ENCODE measurements at regions of chr6 and their contacts with region 1.

Region 1: DNA sequence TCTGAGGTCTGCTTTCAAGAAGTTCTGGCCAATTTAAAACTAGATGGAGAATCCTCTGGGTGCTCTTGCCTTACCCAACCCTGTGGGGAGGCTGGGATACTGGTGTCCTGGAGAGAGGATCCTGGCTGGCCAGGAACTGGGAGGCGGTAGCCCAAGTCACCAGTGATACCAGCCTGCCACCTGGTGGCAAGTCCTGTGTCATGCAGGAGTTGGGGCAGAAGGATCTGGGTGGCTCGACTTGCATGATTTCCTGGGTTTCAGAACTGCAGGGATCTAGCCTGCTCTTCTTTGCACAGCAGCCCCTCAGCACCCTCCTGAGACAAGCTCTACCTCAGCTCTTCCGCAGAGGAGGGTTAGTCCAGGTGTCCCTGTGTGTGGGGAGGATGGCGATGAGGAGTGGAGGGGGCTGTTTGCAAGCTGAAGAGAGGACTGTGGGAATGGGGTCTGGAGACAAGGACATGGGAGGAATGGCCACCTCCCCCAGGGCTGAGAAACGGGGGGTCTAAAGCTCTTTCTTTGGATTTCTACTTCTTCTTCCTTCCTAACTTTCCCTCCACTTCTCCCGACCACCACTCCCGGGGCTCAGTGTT is 4.2 kb downstream of the KCNK17 start:
- DNase-seq: peak; percentile 67
- H3K4me3 Mint-ChIP-seq: no peak overlapping the region
- H3K27ac Mint-ChIP-seq: no peak overlapping the region
- H3K4me1 Mint-ChIP-seq: peaks cover 5% of the 10 kb centered on the region
- H3K27me3 Mint-ChIP-seq: peaks cover 42% of the 10 kb centered on the region

Region 2: GRCh38 chr6:38871741-38872568 is 438.1 kb before region 1 on chr6:
- CTCF ChIA-PET with region 1: interaction called, 12 read pairs
- POLR2A ChIA-PET with region 1: no interaction called
- DNase-seq: peak; percentile 66
- H3K4me3 Mint-ChIP-seq: no peak overlapping the region
- H3K27ac Mint-ChIP-seq: no peak overlapping the region
- H3K4me1 Mint-ChIP-seq: peaks cover 19% of the 10 kb centered on the region
- H3K27me3 Mint-ChIP-seq: peaks cover 6% of the 10 kb centered on the region

Region 3: DNA sequence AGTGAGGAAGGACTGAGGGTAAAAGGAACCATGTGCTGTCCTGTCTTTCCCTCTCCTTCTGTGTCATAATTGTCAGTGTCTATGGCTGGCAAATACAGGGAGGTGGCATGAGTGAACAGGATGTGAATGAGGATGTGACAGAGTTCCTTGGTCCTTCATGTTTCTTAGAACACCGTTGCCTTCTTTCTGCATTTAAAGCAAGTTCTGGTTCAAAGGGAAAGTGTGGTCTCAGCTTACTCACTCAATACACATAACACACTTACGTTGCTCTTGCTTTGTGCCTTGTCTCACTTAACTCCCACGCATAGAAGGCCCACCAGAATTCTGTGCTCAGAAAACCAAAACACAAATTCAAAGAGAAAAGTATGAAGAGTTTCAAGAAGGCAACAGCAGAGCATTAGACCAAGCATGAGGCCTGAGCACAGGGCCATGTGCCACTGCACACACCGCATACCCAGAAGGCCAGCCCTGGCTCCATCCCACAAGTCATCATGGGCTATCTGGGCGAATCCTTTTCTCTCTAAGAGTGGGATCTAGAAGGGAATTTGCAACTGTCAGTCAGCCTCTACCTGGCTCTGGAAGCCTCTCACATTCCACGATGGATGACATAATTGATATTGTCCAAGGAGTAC is 156.2 kb before region 1 on chr6:
- CTCF ChIA-PET with region 1: interaction called, 10 read pairs
- POLR2A ChIA-PET with region 1: no interaction called
- DNase-seq: peak; percentile 23
- H3K4me3 Mint-ChIP-seq: no peak overlapping the region
- H3K27ac Mint-ChIP-seq: peak overlapping the region; percentile 11
- H3K4me1 Mint-ChIP-seq: peaks cover 22% of the 10 kb centered on the region
- H3K27me3 Mint-ChIP-seq: peaks cover 22% of the 10 kb centered on the region

Region 4: DNA sequence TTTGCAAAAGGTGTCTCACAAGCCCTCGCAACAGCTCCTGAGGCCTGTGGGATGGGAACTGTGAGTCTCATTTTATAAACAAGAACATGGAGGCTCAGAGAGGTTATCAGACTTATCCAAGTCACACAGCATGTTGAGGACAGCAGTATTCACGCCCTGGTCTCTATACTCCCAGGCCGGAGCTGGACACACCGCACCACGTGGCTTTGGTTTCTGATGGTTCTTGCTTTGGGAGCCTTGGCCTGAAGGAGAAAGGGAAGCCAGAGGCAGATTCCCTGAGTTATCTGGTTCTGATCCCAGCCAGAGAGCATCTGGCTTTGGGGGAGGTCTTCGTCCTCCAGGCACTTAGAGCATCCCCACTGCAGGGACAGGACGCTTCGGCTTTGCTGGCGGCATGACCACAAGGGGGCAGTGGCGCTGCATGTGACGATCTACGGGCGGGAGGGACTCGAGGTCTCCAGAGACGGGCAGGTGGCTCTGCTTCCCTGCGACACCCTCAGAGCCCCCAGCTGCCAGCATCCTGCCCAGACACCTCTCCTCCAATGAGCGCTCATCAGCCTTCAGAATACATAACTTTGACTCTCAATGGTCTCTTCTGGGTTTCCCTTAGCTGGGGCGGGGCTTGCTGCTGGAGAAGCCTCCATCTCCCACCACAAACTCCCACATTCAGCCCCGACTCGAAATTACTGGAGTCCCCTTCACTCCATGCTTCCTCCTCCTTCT is 143.7 kb before region 1 on chr6:
- CTCF ChIA-PET with region 1: interaction called, 195 read pairs
- POLR2A ChIA-PET with region 1: no interaction called
- DNase-seq: peak; percentile 84
- H3K4me3 Mint-ChIP-seq: no peak overlapping the region
- H3K27ac Mint-ChIP-seq: no peak overlapping the region
- H3K4me1 Mint-ChIP-seq: peaks cover 5% of the 10 kb centered on the region
- H3K27me3 Mint-ChIP-seq: no peaks in the 10 kb centered on the region

Region 5: DNA sequence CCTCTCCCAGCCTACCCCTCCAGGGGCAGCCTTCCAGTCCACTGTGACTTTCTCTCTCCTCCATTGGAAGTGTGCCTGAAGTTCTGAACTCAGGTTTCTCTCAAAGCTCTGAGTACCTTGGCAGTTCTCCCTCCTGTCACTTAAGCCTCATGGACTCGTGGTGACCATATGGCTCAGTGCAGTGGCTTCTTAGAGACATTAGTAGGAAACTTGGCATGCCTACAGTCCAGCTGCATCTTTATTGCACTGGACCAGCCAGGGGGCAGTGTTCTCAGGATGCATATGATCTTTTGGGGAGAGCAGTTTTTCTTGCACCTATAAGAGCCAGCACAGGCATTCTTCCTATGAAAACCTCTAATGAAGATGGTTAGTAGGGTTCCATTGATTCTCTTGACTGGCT is 60.0 kb after region 1 on chr6:
- CTCF ChIA-PET with region 1: no interaction called
- POLR2A ChIA-PET with region 1: no interaction called
- DNase-seq: no peak
- H3K4me3 Mint-ChIP-seq: no peak overlapping the region
- H3K27ac Mint-ChIP-seq: no peak overlapping the region
- H3K4me1 Mint-ChIP-seq: no peaks in the 10 kb centered on the region
- H3K27me3 Mint-ChIP-seq: peaks cover 4% of the 10 kb centered on the region

Measured in activated CD4-positive, alpha-beta memory T cell treated with anti-CD3 and anti-CD28 coated beads, Interleukin-2, amount 10 ng/mL, durations not matched to agents 7 days and 5 days (primary cell).